MCF 10A (cell line): ENCODE measurements at regions of chr4 and their contacts with region 1.

Region 1: GRCh38 chr4:20773144-20773997 is 73.1 kb downstream of the PACRGL start:
- DNase-seq: peak; percentile 75
- H3K4me3 Mint-ChIP-seq: no peak overlapping the region
- H3K27ac Mint-ChIP-seq: peak overlapping the region; percentile 23
- H3K4me1 Mint-ChIP-seq: no peaks in the 10 kb centered on the region
- H3K27me3 Mint-ChIP-seq: no peaks in the 10 kb centered on the region
- CTCF ChIP-seq: peak; percentile 64

Region 2: DNA sequence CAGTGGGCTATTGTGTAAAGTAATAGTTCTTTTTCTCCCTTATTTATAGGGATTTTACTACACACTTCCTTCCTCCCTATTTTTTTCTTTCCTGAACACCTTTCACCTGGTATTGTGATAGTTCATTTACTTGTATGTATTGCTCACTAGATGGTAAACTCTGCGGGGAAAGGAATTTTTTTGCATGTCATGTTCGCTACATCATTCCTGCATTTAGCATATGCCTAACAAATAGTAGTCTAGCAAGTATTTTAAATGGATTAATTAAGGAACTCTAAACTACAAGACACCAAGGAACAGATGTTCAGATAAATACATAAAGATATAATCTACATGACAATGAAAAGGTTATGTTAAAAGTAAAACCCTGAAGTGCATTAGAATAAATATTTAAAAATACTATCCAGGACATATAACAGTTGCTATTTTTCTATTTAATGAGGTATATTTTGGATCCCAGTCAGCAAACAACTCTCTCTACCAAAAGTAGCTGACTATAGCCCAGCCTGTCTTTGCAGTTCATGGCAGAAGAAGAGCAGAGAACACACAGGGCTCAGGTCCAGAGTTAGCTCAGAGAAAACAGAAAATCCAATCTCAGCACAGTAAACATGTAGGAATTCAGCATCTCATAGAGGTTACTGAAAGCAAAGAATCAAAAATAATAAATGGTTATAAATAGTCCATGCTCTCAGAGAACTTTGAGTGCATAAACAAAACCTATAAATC is 14.7 kb after region 1 on chr4:
- CTCF ChIA-PET with region 1: interaction called, 13 read pairs
- POLR2A ChIA-PET with region 1: no interaction called
- intact Hi-C with region 1: no loop called
- DNase-seq: no peak
- H3K4me3 Mint-ChIP-seq: no peak overlapping the region
- H3K27ac Mint-ChIP-seq: no peak overlapping the region
- H3K4me1 Mint-ChIP-seq: no peaks in the 10 kb centered on the region
- H3K27me3 Mint-ChIP-seq: no peaks in the 10 kb centered on the region
- CTCF ChIP-seq: no peak

Region 3: DNA sequence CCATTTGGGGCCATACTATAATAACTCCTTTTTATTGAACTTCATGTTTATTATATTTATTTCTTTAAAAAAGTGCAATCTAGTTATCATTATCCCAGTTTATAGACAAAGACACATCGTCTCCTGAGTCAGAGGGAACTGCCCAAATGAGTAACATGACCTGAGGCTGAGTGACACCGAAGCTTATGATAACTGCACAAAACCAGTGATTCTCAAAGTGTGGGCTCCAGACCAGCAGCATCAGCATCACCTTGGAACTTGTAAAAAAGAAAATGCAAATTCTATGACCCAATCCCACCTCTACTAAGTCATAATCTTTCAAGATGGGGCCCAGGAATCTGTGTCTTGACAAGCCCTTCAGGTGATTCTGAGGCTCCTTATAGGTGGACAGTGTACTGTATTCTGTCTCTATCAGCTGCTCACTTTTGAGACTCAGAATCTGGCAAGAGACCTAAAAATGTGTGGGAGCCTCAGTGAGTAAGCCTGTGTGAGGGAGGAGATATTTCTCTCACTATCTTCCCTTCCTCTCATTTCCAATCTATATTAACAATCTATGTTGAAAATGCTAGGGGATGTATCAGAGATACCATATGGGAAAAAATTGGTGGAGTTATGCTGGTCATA is 73.9 kb after region 1 on chr4:
- CTCF ChIA-PET with region 1: interaction called, 15 read pairs
- POLR2A ChIA-PET with region 1: no interaction called
- intact Hi-C with region 1: no loop called
- DNase-seq: peak; percentile 5
- H3K4me3 Mint-ChIP-seq: no peak overlapping the region
- H3K27ac Mint-ChIP-seq: no peak overlapping the region
- H3K4me1 Mint-ChIP-seq: no peaks in the 10 kb centered on the region
- H3K27me3 Mint-ChIP-seq: no peaks in the 10 kb centered on the region
- CTCF ChIP-seq: no peak

Region 4: DNA sequence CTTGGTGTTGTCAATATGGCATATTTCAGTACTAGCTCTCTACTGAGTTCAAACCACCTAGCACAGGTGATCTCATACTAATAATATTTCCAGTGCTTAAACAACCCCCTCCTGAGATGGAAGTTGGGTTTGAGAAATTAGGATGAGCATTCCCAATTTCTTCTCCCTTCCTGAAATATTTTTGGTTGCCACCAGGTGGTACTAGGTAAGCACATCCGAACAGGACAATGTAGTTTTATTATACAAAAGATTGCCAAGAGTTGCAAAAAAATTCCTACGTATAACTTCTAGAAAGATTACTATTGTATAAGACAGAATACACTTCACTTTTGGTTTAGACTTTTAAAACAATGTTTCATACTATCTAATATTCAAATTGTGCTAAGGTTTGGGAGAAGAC is 411.4 kb after region 1 on chr4:
- CTCF ChIA-PET with region 1: interaction called, 16 read pairs
- POLR2A ChIA-PET with region 1: no interaction called
- intact Hi-C with region 1: no loop called
- DNase-seq: peak; percentile 34
- H3K4me3 Mint-ChIP-seq: no peak overlapping the region
- H3K27ac Mint-ChIP-seq: no peak overlapping the region
- H3K4me1 Mint-ChIP-seq: peaks cover 24% of the 10 kb centered on the region
- H3K27me3 Mint-ChIP-seq: no peaks in the 10 kb centered on the region
- CTCF ChIP-seq: peak; percentile 40

Region 5: DNA sequence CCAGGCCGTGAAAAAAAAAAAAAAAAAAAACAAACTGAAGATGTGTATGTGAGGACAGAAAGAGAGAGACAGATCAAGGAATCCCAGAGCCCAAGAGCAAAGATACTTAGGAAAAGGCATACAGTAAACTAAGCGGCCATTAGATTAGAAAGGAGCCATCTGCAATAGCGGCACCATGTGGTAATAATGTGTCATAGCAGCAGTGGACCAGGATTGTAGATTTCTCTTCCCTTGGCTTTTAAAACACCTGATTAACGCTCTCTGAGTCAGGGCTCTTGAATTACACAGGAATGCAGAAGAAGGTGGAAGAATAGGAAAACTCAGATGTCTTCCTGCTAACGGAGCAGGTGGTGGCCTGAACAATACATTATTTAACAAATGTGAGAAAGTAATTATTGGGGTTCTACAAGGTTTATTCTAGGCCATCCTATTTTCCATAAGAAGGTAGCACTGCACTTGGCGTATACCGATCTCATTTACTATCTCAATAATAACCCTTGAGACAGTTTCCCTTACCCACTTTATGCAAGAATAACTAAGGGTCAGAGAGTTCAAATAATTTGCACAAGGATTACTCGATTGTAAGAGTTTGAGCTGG is 992.5 kb after region 1 on chr4:
- CTCF ChIA-PET with region 1: interaction called, 11 read pairs
- POLR2A ChIA-PET with region 1: no interaction called
- intact Hi-C with region 1: loop called (anchors 5 kb)
- DNase-seq: peak; percentile 73
- H3K4me3 Mint-ChIP-seq: no peak overlapping the region
- H3K27ac Mint-ChIP-seq: no peak overlapping the region
- H3K4me1 Mint-ChIP-seq: peaks cover 6% of the 10 kb centered on the region
- H3K27me3 Mint-ChIP-seq: peaks cover 13% of the 10 kb centered on the region
- CTCF ChIP-seq: peak; percentile 76